Posterior cingulate gyrus (tissue), 11 donors: ENCODE measurements at regions of chr16 and their contacts with region 1.

Region 1: DNA sequence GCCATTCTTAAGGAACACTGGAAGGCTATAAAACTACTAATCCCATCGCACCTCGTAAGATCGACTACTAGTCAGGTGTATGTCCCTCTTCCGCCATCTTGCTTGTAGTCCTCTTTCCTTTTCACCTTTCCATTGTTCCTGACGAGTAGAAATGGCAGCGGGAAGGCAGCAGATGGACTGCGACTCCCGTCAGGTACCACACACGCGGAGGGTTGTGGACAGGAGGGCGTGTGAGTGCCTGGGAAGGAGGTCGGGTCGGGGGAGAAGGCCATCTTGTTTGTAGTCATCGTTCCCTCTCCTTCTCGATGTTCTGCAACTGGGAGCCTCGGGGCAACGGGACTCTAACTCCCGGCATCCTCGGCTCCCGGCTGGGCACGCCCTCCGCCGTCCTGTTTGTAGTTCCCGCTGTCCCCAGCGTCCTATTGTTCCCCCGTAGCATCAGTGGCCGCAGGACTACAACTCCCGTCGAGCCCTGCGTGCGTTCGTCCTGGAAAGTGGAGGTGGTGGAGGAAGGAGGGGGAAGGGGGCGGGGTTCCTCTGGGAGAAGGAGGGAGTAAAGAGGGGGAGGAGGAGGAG is 324 bp upstream of the FBXL19 start:
- DNase-seq: peak; percentile 99 to 100 (median 100)

Region 2: DNA sequence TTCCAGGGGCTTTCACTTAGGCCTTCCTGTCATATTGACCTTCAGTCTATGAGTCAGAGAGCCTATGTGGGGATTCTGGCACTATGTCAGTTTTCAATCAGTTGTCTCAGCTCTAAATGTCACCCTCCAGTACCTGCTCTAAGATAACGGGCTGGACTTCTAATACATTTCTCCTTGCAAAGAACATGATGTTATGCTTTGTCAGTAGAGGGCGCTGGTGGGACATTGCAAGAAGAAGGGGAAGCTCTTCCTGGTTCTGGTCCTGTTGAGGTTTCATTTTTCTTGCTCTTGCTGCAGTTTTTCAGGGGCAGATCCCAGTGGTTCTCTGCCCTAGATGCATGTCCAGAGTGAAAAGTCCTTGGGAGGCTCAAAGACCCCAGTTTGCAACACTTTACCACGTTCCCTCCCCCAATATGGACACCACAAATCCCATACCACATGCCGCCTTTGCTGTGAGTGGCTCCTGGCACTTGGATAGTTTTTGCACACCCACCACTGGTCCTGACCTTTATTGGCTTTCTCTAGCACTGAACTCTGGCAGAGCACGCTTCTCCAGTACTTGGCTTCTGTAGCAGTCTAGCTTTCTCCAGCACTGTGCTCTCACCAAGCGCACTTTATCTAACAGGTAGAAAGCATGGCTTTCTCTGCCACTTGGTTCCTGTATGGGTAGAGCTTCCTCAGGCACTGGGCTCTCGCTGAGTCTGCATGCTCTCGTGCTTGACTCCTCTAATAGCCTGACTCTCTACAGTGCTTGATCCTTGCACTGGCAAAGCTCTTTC is 78.2 kb before region 1 on chr16:
- intact Hi-C with region 1: loop called (anchors 1 kb)
- DNase-seq: peak in 5 of 10 donors; percentile 38 to 67 (median 51)

Region 3: DNA sequence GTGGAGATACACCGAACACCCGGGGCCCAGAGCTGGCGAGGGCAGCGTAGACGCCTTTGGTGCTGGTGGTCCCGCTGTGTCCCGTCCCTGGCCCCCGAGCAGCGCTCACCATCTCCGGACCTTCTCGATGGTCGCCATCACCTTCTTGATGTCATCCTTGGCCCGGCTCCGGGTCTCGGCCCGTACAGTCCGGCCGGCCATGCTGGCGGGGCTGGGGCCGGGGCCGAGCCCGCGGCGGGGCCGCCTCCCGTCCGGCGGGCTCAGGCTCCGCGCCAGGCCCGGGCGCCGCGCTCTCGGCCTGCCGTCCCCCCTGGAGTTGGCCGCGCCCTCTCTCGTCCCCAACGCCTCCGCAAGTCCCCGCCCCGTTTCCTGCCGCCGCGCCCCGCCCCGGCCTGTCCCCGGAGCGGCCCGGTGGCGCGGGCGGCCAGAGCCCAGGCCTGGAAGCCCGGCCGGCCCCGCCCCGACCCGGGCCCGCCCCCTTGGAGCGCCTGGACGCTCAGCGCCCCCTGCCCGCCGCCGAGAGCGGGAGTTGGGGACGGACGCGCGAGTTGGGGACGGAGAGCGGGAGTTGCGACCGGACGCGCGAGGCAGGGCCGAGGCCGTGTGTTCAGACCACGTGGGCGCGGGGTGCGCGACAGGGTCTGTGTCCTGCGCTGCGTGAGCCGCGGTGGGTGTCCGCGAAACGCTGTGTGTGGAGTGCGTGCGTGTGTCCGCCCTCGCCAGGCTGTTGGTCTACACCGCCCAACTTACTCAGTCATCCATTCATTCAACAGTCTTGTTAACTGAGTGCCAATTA is 29.1 kb before region 1 on chr16 and contains the start of gene BCL7C:
- intact Hi-C with region 1: loop called (anchors 2 kb)
- DNase-seq: peak; percentile 71 to 97 (median 80)

Region 4: DNA sequence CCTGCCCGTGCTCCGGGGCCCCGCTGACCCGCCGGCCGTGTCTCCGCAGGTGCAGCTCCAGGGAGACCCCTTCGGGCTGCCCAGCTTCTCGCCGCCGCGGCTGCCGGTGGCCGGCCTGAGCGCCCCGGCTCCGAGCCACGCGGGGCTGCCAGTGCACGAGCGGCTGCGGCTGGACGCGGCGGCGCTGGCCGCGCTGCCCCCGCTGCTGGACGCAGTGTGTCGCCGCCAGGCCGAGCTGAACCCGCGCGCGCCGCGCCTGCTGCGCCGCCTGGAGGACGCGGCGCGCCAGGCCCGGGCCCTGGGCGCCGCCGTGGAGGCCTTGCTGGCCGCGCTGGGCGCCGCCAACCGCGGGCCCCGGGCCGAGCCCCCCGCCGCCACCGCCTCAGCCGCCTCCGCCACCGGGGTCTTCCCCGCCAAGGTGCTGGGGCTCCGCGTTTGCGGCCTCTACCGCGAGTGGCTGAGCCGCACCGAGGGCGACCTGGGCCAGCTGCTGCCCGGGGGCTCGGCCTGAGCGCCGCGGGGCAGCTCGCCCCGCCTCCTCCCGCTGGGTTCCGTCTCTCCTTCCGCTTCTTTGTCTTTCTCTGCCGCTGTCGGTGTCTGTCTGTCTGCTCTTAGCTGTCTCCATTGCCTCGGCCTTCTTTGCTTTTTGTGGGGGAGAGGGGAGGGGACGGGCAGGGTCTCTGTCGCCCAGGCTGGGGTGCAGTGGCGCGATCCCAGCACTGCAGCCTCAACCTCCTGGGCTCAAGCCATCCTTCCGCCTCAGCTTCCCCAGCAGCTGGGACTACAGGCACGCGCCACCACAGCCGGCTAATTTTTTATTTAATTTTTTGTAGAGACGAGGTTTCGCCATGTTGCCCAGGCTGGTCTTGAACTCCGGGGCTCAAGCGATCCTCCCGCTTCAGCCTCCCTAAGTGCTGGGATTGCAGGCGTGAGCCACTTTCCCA is 20.7 kb before region 1 on chr16:
- intact Hi-C with region 1: loop called (anchors 2 kb)
- DNase-seq: peak in 9 of 10 donors; percentile 37 to 94 (median 61)